PC-9 (cell line): ENCODE measurements at regions of chr19 and their contacts with region 1.

Region 1: GRCh38 chr19:19372656-19373416 is 32.6 kb upstream of the GATAD2A start:
- DNase-seq: peak; percentile 56 to 60
- H3K4me3 ChIP-seq: no peak overlapping the region
- H3K27ac ChIP-seq: peak overlapping the region; percentile 52
- H3K4me1 ChIP-seq: peaks cover 47% of the 10 kb centered on the region
- H3K27me3 ChIP-seq: no peaks in the 10 kb centered on the region
- CTCF ChIP-seq: no peak

Region 2: GRCh38 chr19:19192078-19192882 is 180.6 kb before region 1 on chr19 and contains the starts of genes BORCS8 and RFXANK:
- CTCF ChIA-PET with region 1: no interaction called
- POLR2A ChIA-PET with region 1: interaction called, 11 read pairs
- intact Hi-C with region 1: no loop called
- DNase-seq: peak; percentile 98 to 99
- H3K4me3 ChIP-seq: peak within 1 kb of the TSS; percentile 84
- H3K27ac ChIP-seq: peak within 1 kb of the TSS; percentile 85
- H3K4me1 ChIP-seq: peaks cover 22% of the 10 kb centered on the region
- H3K27me3 ChIP-seq: no peaks in the 10 kb centered on the region
- CTCF ChIP-seq: no peak
- total RNA-seq, gene BORCS8: 23.1 and 24.9 TPM in 2 replicates
- total RNA-seq, gene RFXANK: 132 and 161 TPM in 2 replicates

Region 3: DNA sequence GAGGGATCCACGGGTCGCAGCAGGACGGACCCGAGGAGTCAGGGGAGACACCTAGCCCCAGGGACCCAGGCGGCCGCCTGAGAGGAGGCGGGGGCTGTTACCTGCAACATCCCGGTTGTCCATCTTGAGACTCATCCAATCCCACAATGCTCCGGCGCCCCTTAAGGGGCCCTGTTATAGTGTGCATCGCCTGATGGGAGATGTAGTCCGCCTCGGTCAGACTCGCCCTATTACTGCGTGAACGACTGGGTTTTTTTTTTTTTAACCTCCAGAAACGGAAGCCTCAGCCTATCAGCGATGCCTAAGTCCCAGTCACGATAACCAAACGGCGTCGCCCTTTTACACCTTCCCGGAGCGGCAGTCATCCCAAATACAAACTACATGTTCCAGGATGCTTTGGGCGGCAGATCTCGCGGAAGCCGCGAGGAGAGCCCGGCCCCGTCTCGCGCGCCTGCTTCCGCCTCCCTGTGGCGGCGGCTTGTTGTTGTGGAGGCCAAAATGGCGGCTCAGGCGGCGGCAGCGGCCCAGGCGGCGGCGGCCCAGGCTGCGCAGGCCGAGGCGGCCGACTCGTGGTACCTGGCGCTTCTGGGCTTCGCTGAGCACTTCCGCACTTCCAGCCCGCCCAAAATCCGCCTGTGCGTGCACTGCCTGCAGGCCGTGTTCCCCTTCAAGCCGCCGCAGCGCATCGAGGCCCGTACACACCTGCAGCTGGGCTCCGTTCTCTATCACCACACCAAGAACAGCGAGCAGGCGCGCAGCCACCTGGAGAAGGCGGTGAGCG is 52.3 kb before region 1 on chr19 and contains the starts of genes MAU2 and SUGP1:
- CTCF ChIA-PET with region 1: no interaction called
- POLR2A ChIA-PET with region 1: no interaction called
- intact Hi-C with region 1: no loop called
- DNase-seq: peak; percentile 90
- H3K4me3 ChIP-seq: peak within 1 kb of the TSS; percentile 93
- H3K27ac ChIP-seq: peak within 1 kb of the TSS; percentile 71
- H3K4me1 ChIP-seq: peaks cover 23% of the 10 kb centered on the region
- H3K27me3 ChIP-seq: no peaks in the 10 kb centered on the region
- CTCF ChIP-seq: no peak; the same call in 1 of the 2 replicates
- total RNA-seq, gene MAU2: 46.1 and 55.2 TPM in 2 replicates
- total RNA-seq, gene SUGP1: 39.9 and 56.7 TPM in 2 replicates

Region 4: DNA sequence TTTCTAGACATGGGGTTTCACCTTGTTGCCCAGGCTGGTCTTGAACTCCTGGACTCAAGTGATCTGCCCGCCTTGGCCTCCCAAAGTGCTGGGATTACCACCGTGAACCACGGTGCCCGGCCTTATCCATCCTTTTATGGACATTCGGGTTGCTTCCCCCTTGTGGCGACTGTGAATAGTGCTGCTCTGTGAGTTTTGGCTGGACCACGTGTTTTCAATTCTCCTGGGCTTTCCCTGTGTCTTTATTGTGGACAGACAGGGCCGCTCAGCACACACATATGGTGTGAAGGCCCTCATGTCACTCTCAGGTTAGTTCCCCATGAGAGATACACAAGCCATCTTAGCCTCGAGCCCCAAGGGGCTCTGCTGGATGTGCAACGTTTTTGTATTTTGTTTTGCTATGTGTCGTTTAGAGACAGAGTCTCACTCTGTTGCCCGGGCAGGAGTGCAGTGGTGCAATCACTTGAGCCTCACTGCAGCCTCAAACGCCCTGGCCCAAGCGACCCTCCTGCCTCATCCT is 11.7 kb before region 1 on chr19:
- CTCF ChIA-PET with region 1: interaction called, 17 read pairs
- POLR2A ChIA-PET with region 1: interaction called, 3 read pairs
- intact Hi-C with region 1: no loop called
- DNase-seq: peak; percentile 61 to 72
- H3K4me3 ChIP-seq: no peak overlapping the region
- H3K27ac ChIP-seq: no peak overlapping the region
- H3K4me1 ChIP-seq: peaks cover 10% of the 10 kb centered on the region; the same call in 1 of the 2 replicates
- H3K27me3 ChIP-seq: no peaks in the 10 kb centered on the region
- CTCF ChIP-seq: peak; percentile 92

Region 5: DNA sequence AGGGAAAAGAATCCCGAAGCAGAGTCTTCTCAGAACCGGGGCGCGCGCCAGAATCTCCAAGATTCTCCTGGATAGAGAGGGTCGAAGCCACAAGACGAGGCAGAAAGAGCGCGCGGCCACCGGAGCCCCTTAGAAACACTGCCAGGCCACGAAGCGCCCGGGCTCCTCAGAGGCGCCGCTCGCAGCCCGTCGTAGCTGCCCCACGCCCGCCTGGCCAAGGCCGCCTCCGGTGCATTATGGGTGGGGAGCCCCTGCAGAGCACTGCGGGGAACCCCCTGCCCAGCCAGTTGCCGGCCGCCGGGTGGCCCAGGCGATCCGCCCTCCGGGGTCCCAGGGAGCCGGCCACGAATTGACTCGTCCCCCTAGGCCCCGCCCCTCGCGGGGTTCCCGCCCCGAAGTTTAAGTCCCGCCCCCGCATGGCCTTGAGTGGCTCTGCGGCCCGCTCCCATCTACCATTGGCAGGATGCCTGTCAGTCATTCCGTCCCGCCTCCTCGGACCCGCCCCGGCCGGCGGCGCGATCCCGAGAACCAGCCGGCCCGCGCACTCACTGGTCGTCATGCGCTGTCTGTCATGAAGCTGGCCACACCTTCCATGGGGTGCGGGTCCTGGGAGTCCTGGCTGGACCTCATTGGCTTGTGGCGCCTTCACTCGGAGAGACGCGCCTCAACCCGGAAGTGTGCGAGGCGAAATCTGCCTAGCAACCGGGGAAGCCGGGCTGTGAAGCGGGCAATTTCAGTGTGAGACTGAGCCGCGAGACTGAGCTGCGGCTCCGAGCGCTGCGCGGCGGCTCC is 12.5 kb after region 1 on chr19:
- CTCF ChIA-PET with region 1: no interaction called
- POLR2A ChIA-PET with region 1: interaction called, 12 read pairs
- intact Hi-C with region 1: no loop called
- DNase-seq: peak; percentile 99 to 100
- H3K4me3 ChIP-seq: peak overlapping the region; percentile 56
- H3K27ac ChIP-seq: peak overlapping the region; percentile 68
- H3K4me1 ChIP-seq: peaks cover 33% of the 10 kb centered on the region
- H3K27me3 ChIP-seq: no peaks in the 10 kb centered on the region
- CTCF ChIP-seq: no peak

Region 6: GRCh38 chr19:19410275-19411192 is 37.7 kb after region 1 on chr19:
- CTCF ChIA-PET with region 1: interaction called, 5 read pairs
- POLR2A ChIA-PET with region 1: interaction called, 9 read pairs
- intact Hi-C with region 1: loop called (anchors 1 kb)
- DNase-seq: no peak
- H3K4me3 ChIP-seq: no peak overlapping the region
- H3K27ac ChIP-seq: no peak overlapping the region
- H3K4me1 ChIP-seq: peaks cover 39% of the 10 kb centered on the region
- H3K27me3 ChIP-seq: no peaks in the 10 kb centered on the region
- CTCF ChIP-seq: no peak

Region 7: DNA sequence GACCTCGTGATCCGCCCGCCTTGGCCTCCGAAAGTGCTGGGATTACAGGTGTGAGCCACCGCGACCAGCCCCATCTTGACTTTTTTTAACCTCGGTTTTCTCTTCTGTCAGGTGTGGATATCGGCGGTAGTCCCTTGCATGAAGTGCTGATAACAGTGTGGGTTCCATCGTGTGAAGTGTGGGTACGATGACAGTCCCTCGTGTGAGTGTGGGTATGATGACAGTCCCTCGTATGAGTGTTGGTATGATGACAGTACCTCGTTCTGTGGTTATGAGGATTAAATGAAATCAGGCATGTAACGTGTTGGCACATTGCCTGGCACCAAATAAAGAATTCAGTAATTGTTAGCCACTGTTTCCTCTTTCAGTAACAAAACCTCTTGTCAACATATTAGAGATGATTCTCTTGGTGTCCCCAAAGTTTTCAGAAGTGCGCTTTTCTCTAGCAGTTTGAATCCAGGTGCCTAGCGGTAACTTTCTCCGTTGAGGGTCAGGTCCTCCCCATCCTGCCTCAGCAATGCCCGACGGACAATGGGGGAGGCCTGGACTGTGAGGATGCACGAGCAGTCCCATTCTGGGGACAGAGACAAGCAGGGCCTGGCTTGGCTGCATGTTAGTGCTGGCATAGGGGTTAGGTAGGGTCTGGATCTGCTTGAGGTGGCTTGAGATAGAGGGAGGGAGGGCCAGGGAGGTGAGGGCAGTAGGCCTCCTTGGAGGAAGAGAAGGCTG is 47.9 kb after region 1 on chr19:
- CTCF ChIA-PET with region 1: no interaction called
- POLR2A ChIA-PET with region 1: no interaction called
- intact Hi-C with region 1: no loop called
- DNase-seq: no peak
- H3K4me3 ChIP-seq: no peak overlapping the region
- H3K27ac ChIP-seq: no peak overlapping the region
- H3K4me1 ChIP-seq: no peaks in the 10 kb centered on the region
- H3K27me3 ChIP-seq: no peaks in the 10 kb centered on the region
- CTCF ChIP-seq: no peak